ENCODE measurements at regions of chr3 and their contacts with region 1.

Region 1: DNA sequence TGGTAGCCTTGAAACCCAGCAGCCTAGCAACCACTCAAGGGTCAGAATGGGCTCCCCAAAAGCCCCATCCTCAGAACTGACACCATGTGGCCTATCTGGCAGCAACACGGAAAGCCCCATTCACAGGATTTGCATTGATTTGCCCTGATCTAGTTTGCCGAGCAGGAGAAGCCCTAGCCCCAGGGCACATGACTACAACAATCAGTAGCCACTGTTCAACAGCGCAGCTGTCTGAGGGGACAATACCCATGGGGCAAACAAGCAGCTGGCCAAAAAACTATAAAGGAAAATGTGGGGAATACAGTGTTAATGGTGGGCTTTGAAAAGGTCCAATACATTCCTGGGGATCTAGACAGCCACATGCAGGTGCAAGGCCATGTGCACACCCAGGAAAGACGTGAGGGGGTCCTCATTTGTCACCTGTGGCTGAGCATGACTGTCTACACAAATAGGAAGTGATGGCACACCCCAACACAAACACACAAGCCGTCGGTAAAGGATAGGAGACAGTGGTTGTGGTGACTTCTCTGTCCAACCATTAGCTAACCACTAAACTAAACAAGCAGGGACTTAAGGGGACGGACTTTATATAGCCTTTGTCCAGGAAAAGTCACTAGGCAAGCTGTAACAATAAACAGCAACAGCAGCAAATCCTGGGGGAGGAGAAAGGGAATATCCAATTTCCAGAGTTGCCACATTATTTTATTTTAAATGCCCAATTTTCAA is 113.7 kb downstream of the LRIG1 start:
- DNase-seq: no peak

Region 2: DNA sequence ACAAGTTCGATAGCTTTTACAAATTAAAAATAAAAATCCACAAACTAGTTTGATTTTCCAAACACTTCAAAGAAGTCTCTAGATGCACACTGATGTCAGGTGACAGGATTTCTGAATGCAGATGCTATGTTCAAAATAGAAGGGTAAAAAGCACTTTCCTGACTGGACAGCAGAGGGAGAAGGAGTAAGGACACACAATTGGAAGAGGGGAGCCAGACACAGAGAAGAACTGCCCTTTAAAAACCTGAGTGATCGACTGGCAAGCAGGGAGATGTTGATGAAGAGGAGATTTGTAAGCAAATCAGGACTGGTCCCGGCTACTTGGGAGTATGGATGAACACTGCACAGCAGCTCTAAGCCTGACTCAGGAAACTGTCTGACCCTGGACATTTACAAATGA is 961.2 kb before region 1 on chr3:
- intact Hi-C with region 1: no loop called
- DNase-seq: no peak

Region 3: DNA sequence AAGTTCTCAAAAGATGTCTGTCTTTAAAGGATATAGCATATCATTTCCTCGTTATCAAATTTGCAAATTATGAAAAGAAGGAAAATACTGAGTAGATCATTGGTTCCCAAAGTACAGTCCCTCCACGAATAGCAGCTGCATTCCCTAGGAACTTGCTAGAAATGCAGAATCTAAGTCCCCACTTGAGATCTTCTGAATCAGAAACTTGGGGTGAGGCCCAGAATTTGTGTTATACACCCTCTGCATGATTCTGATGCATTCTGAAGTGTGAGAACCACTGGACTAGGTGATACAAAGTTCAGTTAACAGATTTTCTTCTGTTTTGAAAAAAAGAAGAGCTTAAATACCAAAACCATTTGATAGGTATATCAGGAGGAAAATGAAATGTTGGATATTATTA is 89.2 kb before region 1 on chr3:
- intact Hi-C with region 1: loop called in 1 of 2 experiments (anchors 10 kb)
- DNase-seq: no peak

Measured in posterior vena cava (tissue), 2 donors.